ENCODE measurements at regions of chr14 and their contacts with region 1.

Region 1: DNA sequence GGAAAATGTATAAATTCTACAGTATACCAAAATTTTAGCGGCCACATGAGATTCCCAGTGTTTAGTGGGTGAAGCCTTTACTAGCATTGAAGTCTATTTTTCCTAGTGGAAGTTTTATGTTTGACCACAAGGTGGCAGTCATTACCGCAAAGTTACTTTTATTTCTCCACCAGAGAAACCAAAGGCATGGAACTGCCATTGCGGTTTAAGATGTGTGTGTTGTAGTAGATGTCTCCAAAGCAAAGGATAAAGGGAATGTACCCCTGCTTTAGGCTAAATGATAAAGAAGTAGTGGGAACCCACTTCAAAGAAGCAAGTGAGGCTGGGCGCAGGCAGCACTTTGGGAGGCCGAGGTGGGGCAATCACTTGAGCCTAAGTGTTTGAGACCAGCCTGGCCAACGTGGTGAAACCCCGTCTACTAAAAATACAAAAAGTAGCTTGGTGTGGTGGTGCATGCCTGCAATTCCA is 140.5 kb downstream of the PRKCH start:
- DNase-seq: no peak
- ATAC-seq: no peak

Region 2: GRCh38 chr14:61213191-61213621 is 248.6 kb before region 1 on chr14:
- intact Hi-C with region 1: no loop called
- DNase-seq: no peak
- ATAC-seq: no peak

Region 3: DNA sequence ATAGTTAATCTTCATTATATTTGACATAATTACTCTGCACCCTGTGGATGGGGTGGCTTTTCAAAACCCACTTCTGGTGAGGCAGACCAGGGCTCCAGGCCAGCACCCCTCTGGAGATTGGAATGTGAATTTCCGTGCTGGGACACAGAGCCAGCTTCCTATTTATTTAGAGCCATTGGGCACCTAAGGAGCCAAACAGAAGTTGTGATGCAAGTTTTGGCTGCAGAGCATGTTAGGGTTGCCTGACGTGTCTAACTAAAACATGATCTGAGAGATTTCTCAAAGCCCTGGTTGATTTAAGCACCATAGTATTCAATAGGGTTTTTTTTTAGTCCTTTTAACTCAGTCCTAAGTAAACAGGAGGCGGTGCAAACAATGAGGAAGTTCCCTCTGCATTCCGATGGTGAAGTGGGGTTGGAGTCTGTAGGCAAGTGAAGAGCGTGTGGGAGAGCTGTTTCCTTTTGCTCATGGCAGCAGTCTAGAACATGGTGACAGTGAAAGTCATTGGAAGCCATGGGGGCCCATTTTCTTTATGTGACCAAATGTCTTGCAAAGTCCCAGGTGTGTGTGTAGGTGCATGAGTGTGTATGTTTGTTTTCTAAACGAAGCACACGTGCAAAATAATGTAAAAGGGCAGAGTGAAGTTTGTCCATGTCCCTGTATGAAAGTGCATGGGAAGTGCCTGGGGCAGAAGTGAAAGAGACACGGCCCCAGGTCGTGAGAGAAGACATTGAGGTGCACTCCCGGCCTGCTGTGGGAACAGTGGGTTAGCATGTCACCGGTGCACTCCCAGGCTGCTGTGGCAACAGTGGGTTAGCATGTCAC is 22.8 kb before region 1 on chr14:
- intact Hi-C with region 1: no loop called
- DNase-seq: no peak
- ATAC-seq: peak; percentile 69

Region 4: DNA sequence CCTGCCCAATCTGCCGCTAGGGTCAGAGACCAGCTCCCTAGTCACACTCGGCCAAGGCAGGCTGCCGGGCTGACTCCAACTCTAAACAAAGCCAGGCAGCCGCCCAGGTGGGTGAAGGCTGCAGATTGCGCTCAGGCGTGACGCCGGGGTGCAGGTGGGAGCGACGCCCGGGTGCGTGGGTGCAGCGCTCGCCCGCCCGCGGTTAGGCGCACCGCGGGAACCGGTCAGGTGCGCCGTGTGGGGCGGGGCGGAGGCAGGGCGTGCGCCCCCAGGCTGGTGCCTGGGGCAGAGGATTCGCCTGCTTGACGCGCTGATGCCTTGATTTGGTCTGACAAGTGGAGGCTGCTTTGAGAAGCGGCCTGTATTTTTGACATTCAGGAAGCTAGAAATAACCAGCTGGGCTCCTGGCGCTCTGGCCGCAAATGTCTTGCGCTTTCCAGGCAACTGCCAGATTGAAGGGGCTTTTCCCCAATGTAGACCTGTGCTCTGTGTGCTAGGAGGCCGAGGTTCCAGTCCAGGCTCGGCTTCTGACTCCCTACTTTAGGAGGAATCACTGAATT is 106.8 kb after region 1 on chr14:
- intact Hi-C with region 1: loop called (anchors 2 kb)
- DNase-seq: peak; percentile 69
- ATAC-seq: peak; percentile 51

Region 5: DNA sequence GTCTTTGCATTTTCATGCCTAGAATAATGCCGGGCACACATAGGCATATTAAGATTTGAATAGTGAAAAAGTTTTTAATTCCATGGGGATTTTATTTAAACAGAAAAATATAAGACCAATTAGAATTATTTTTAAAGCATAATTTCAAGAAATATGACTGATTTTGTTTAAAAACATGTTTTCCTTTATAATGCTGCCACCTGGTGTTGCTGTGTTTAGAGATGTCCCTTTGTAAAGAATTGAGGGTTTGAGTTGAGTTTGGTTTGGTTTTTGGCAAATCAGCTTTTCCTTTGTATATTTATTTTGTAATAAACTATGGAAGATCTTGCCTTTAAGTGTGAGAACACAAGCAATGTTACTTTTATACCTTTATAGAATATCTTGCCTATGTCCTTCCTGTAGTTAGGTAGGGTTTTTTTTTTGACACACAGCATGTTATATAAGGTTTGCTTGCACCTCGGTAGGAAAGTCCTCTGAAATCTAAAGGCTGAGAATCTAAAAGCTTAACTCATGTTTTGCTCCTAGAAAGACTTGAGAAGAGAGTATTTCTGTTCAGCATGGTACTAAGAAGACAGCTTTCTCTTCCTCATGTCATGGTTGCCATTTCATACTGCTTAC is 269.0 kb after region 1 on chr14:
- intact Hi-C with region 1: loop called (anchors 2 kb)
- DNase-seq: no peak
- ATAC-seq: no peak

Measured in Right ventricle myocardium inferior (tissue), 1 donor.